Ovary (tissue), 10 donors: ENCODE measurements at regions of chr3 and their contacts with region 1.

Region 1: GRCh38 chr3:61561374-61562041 is at the start of gene PTPRG:
- DNase-seq: peak; percentile 93 to 95 (median 94)
- H3K4me3 ChIP-seq: peak within 1 kb of the TSS; percentile 62
- H3K27ac ChIP-seq: peak within 1 kb of the TSS; percentile 85 to 94
- H3K4me1 ChIP-seq: no peaks in the 10 kb centered on the region
- H3K27me3 ChIP-seq: no peaks in the 10 kb centered on the region
- CTCF ChIP-seq: peak in 1 of 3 donors; percentile 20
- EP300 ChIP-seq: no peak
- POLR2A ChIP-seq: peak; percentile 61
- total RNA-seq, gene PTPRG: 33.8 to 87.9 (median 50.4) TPM

Region 2: DNA sequence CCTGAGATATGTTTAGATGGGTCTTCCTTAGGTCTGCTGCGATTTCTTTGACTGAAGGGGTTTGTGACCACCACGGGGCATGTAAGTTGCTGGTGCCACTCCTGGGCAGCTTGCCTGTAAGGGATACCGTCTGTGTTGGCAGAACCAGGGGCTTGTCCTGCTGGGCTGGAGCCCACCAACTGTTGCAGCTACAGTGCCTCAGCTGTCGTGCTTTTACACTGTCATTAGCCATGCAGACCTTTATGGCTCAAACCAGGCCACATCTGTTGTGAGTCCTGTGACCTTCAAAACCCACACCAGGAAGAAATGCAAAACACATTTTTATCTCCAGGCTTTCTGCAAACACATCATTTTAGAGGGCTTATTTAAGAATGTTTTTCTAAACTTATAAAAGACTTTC is 168.5 kb after region 1 on chr3:
- intact Hi-C with region 1: loop called in 1 of 4 experiments (anchors 5 kb)
- DNase-seq: peak in 2 of 5 donors; percentile 17 to 38
- H3K4me3 ChIP-seq: no peak overlapping the region
- H3K27ac ChIP-seq: peak overlapping the region in 1 of 2 donors; percentile 57
- H3K4me1 ChIP-seq: peaks cover 16% of the 10 kb centered on the region
- H3K27me3 ChIP-seq: no peaks in the 10 kb centered on the region
- CTCF ChIP-seq: no peak
- EP300 ChIP-seq: no peak
- POLR2A ChIP-seq: no peak

Region 3: DNA sequence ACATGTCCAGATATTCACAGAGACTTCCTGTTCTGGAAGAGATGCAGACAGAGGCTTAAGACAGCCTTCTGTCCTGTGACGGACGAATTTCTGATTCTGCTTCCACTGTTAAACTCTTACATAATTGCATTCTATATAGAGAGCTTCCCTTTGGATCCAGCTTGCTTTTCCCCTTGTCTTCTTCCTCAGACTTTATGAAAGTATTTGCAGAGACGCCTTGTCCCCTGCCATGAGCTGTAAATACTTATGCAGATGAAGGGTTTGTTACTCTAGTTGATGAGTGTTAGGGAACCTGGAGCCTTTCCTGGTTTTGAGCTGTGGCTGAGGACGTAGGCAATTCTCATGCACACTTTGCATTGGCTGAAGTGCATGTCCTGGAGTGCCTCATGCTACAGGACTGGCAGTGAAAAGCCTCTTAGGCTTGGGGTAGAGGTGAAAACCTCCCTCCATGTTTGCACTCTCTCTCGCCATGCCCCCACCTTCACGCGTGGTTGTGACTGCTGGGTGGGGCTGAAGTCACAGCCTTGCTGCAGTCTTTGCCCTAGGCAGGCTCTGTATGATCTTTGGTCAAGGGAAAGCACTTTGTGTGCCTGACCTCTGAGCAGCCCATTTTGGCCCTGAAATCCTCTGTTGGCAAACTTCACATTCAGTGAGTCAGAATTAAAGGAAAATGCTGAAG is 286.4 kb after region 1 on chr3:
- intact Hi-C with region 1: loop called in 2 of 4 experiments (anchors 2 to 5 kb)
- DNase-seq: peak; percentile 56 to 81 (median 69)
- H3K4me3 ChIP-seq: no peak overlapping the region
- H3K27ac ChIP-seq: peak overlapping the region in 1 of 2 donors; percentile 46
- H3K4me1 ChIP-seq: peaks cover 9% of the 10 kb centered on the region
- H3K27me3 ChIP-seq: no peaks in the 10 kb centered on the region
- CTCF ChIP-seq: no peak
- EP300 ChIP-seq: no peak
- POLR2A ChIP-seq: no peak

Region 4: GRCh38 chr3:61858056-61858455 is 296.5 kb after region 1 on chr3:
- intact Hi-C with region 1: loop called in 1 of 4 experiments (anchors 5 kb)
- DNase-seq: no peak
- H3K4me3 ChIP-seq: no peak overlapping the region
- H3K27ac ChIP-seq: no peak overlapping the region
- H3K4me1 ChIP-seq: peaks cover 2% of the 10 kb centered on the region
- H3K27me3 ChIP-seq: no peaks in the 10 kb centered on the region
- CTCF ChIP-seq: no peak
- EP300 ChIP-seq: no peak
- POLR2A ChIP-seq: no peak

Region 5: GRCh38 chr3:61947456-61947855 is 385.9 kb after region 1 on chr3:
- intact Hi-C with region 1: loop called in 1 of 4 experiments (anchors 10 kb)
- DNase-seq: no peak
- H3K4me3 ChIP-seq: no peak overlapping the region
- H3K27ac ChIP-seq: no peak overlapping the region
- H3K4me1 ChIP-seq: no peaks in the 10 kb centered on the region
- H3K27me3 ChIP-seq: no peaks in the 10 kb centered on the region
- CTCF ChIP-seq: no peak
- EP300 ChIP-seq: no peak
- POLR2A ChIP-seq: no peak

Region 6: GRCh38 chr3:62027796-62028195 is 466.3 kb after region 1 on chr3:
- intact Hi-C with region 1: loop called in 1 of 4 experiments (anchors 5 kb)
- DNase-seq: no peak
- H3K4me3 ChIP-seq: no peak overlapping the region
- H3K27ac ChIP-seq: no peak overlapping the region
- H3K4me1 ChIP-seq: peaks cover 11% of the 10 kb centered on the region
- H3K27me3 ChIP-seq: no peaks in the 10 kb centered on the region
- CTCF ChIP-seq: no peak
- EP300 ChIP-seq: no peak
- POLR2A ChIP-seq: no peak

Region 7: DNA sequence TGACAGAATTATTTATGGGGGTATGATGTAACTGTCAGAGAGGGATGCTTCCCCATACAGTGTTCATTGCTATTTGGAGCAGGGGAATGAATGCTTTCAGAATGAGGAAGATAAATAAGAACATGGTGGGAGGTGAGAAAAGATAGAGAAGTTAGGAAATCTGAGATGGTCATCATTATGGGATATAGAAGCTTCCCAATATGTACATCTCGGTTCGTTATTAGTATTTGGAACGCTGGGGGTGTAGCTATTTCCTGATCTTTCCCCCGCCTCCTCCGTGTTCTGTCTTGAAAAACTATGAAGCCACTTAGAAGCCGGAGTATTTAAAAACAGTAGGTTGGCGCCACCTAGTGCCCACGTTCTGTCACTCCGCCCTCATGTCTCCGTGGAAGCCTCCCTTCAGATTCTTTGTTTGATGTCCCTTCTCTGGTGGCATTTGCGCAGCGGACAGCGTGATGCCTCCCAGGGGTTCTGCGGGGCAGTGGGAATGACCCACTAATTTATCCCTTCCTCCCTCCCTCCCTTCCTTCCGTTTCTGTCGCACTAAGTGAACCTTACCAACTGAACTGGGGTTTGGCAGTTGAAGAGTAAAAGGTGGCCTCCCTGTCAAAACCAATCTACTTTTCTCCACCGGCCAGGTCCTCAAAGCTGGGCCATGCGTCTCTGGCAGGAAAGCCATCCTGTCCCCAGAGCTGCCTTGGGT is 627.3 kb after region 1 on chr3:
- intact Hi-C with region 1: loop called (anchors 5 to 10 kb)
- DNase-seq: peak; percentile 70 to 84 (median 78)
- H3K4me3 ChIP-seq: no peak overlapping the region
- H3K27ac ChIP-seq: no peak overlapping the region
- H3K4me1 ChIP-seq: peaks cover 15% of the 10 kb centered on the region
- H3K27me3 ChIP-seq: no peaks in the 10 kb centered on the region
- CTCF ChIP-seq: peak; percentile 39 to 77 (median 61)
- EP300 ChIP-seq: no peak
- POLR2A ChIP-seq: no peak